HEK293 (cell line): ENCODE measurements at regions of chr2 and their contacts with region 1.

Region 1: DNA sequence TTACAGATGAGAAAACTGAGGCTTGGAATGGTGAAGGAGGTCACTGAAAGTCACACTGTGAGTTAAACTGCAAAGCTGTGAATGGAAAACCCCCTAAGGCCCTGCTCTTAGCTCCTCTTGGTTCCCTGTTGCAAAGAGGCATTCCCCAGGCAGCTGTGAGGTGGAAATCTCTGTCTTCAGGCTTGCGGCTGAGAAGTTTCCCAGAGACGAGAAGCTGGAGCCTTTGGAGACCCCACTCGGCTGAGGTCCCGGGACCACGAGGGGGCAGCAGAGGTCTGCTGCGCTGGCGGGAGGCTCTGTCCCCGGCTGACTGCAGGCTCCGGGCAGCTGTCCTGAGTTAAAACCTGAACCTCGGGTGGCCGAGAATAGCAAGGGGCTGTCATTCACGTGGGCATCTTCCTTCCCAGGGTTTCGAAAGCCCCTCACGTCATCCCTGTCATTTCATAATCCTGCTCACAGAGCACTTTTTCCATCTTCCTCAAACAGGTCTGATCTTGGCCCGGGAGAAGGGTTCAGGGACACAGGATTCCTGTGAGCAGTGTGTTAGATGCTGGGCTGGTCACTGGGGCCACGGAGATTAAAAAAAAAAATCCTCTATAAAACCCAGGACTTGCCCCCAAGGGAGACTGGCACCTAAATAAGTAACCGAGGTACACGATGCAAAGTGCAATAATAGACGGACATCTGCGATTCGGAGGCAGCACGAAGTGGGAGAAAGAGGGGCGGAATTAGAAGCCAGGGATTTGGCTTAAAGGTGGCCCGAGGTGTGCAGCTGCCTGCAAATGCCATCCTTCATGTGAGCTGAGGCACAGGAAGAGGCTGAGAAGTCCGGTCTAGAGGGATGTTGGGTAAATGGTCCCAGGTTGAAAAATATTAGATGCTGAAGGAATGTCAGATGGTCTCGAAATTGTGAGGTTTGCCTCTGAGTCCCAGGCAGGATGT is 24.6 kb upstream of the ATOH8 start:
- H3K4me3 ChIP-seq: no peak overlapping the region
- H3K27ac ChIP-seq: no peak overlapping the region
- H3K4me1 ChIP-seq: peaks cover 2% of the 10 kb centered on the region
- CTCF ChIP-seq: peak; percentile 93

Region 2: GRCh38 chr2:85635636-85636035 is 93.5 kb before region 1 on chr2:
- CTCF ChIA-PET with region 1: interaction called, 15 read pairs
- POLR2A ChIA-PET with region 1: no interaction called
- H3K4me3 ChIP-seq: no peak overlapping the region
- H3K27ac ChIP-seq: no peak overlapping the region
- H3K4me1 ChIP-seq: no peaks in the 10 kb centered on the region
- CTCF ChIP-seq: no peak

Region 3: GRCh38 chr2:85712849-85713602 is 16.1 kb before region 1 on chr2:
- CTCF ChIA-PET with region 1: interaction called, 15 read pairs
- POLR2A ChIA-PET with region 1: no interaction called
- H3K4me3 ChIP-seq: no peak overlapping the region
- H3K27ac ChIP-seq: no peak overlapping the region
- H3K4me1 ChIP-seq: no peaks in the 10 kb centered on the region
- CTCF ChIP-seq: no peak

Region 4: GRCh38 chr2:85750587-85751575 is 21.7 kb after region 1 on chr2:
- CTCF ChIA-PET with region 1: interaction called, 45 read pairs
- POLR2A ChIA-PET with region 1: no interaction called
- H3K4me3 ChIP-seq: no peak overlapping the region
- H3K27ac ChIP-seq: no peak overlapping the region
- H3K4me1 ChIP-seq: peaks cover 12% of the 10 kb centered on the region
- CTCF ChIP-seq: peak; percentile 73; the same call in 1 of the 2 replicates

Region 5: DNA sequence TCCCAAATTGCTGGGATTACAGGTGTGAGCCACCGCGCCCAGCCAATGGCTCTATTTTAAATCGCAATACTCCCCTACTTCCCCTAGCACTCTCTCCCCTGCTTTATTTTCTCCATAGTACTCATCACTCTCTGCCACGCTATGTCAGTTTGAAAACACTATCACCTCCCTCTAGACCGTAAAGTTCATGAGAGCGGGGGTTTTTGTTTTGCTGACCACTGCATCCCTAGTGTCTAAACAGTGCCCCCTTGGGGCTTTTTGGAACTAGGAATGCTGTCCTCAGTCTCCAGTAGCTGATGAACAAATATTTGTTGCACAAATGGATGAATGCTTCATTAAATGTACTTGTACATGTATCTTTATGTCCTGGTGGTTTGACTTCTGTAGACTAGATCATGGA is 68.8 kb after region 1 on chr2:
- CTCF ChIA-PET with region 1: interaction called, 33 read pairs
- POLR2A ChIA-PET with region 1: no interaction called
- H3K4me3 ChIP-seq: no peak overlapping the region
- H3K27ac ChIP-seq: no peak overlapping the region
- H3K4me1 ChIP-seq: no peaks in the 10 kb centered on the region; the same call in 1 of the 2 replicates
- CTCF ChIP-seq: no peak

Region 6: DNA sequence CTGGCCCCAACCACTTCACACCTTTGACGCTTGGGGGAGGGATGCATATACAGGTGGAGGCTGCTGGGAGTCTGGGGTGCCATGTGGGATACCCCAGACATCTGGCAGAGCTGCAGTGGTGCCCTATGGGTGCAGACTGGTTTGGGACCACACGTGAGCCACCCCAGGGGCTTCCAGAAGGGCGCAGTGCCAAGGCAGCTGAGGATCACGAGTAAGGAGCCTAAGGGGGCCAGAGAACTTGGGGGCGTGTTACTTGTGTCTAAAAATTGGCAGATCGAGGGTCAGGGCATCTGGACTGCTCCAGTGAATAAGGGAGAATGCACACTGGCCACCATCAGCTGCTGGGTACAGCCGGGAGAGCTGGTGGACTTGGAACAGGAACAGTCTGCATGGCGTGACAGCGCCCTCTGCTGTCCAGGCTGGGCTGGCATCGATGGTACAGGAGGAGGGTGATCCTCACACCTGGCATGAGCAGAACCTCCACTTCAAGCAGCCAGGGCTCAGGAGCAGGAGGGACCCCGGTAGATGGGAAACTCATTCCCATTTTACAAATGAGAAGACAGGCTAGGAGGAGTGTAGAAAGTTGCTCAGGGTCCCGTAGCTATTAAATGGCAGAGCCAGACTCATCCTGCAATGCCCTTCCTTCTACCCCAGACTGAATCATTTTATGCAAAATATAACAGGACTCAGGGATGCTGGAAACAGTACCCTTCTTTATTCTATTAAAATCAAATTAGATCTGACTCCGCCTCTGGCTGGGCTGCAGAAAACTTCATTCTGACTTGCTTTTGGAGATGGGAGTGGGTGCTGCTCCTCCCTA is 85.0 kb after region 1 on chr2:
- CTCF ChIA-PET with region 1: interaction called, 141 read pairs
- POLR2A ChIA-PET with region 1: interaction called, 3 read pairs
- H3K4me3 ChIP-seq: no peak overlapping the region
- H3K27ac ChIP-seq: no peak overlapping the region
- H3K4me1 ChIP-seq: no peaks in the 10 kb centered on the region
- CTCF ChIP-seq: peak; percentile 85